ENCODE measurements at regions of chr19 and their contacts with region 1.

Region 1: DNA sequence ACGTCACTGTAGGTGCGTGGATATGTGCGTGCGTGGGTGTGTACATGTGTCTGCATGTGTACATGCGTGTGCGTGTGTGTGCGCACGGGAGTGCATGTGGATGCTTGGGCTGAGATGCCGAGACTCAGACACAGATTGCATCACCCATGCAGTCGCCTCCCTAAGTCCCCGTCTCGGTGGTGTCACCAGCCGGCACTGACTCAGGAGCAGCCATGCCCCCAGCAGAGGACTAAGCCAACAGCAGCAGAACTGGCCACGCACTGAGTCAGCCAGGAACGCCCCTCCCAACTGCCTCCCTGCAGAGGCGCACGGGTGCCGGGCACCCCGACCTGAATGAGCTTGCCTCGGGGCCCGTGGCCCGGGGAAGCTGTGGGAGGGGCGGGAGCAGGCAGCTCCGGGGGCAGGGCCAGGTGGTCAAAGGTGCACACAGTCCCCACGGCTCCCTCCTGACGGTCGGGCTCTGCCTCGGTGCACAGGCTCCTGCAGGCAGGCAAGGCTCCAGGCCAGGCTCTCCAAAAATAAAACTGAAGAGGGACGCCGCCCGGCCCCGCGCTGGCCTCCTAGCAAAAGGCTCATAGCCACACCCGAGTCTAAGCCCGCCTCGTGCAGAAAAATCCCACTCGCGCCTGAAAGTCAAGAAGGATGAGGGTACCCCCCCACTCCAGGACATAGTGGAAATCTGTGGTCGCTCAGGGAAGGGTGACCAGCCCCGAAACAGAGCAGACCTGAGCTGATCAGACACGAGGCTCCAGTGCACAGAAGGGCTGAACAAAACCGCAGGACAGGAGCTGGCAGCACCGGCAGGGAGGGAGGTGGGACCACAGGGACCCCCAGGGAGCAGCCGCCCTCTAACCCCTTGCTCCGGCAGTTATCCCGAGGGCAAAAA is 49.2 kb downstream of the GADD45B start:
- DNase-seq: peak; percentile 74 to 86
- ATAC-seq: peak; percentile 82 to 91
- H3K4me3 ChIP-seq: peak overlapping the region; percentile 31
- H3K27ac ChIP-seq: peak overlapping the region; percentile 97 to 99
- H3K4me1 ChIP-seq: peaks cover 53% of the 10 kb centered on the region
- CTCF ChIP-seq: no peak
- EP300 ChIP-seq: peak; percentile 59 to 77; a peak in 3 of 5 replicates
- POLR2A ChIP-seq: no peak
- RAD21 ChIP-seq: peak; percentile 4 to 36; a peak in 2 of 5 replicates

Region 2: GRCh38 chr19:2543463-2544442 is 18.7 kb after region 1 on chr19:
- CTCF ChIA-PET with region 1: interaction called, 16 read pairs
- POLR2A ChIA-PET with region 1: interaction called, 10 read pairs
- DNase-seq: peak; percentile 73 to 93
- ATAC-seq: peak; percentile 81 to 82
- H3K4me3 ChIP-seq: peak overlapping the region; percentile 33; the same call in 2 of the 3 replicates
- H3K27ac ChIP-seq: peak overlapping the region; percentile 97 to 100
- H3K4me1 ChIP-seq: peaks cover 64% of the 10 kb centered on the region
- CTCF ChIP-seq: no peak
- EP300 ChIP-seq: peak in 1 of 2 experiments; percentile 37; a peak in 1 of 5 replicates
- POLR2A ChIP-seq: no peak
- RAD21 ChIP-seq: peak; percentile 39 to 58

Region 3: DNA sequence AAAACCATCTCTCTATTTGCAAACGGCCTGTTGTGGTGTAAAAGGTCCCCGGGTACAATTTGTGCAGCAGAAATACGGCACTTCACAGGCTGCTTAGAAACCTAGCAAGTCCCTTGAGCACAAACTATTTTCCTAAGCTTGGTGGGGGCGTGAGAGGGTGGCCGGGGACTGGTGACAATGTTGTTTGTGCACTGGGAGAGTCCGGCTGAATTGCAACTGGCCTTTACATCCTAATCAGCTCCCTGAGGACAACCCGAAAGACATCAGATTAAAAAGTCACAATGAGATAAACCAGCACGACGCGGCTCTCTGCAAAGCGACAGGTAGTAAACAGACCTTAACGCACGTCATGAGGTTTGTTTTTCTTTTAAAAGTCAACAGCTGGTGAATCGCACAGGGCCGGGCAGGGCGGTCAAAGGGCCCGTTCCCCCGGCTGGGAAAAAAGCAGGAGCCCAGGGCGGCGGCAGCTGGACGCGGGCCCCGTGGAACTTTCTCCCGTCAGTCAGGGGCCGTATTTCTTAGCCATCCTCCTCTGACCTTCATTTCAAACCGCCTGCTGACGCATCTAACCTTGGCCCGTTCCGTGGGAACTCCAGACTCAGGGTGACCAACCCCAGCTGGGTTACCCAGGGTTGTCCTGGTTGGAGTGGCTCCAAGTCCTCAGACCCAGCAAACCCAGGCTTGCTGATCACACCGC is 63.1 kb after region 1 on chr19:
- CTCF ChIA-PET with region 1: no interaction called
- POLR2A ChIA-PET with region 1: no interaction called
- DNase-seq: peak; percentile 43 to 76
- ATAC-seq: peak; percentile 65 to 79; a peak in 5 of 6 replicates
- H3K4me3 ChIP-seq: peak overlapping the region; percentile 21; the same call in 2 of the 3 replicates
- H3K27ac ChIP-seq: peak overlapping the region; percentile 70 to 79
- H3K4me1 ChIP-seq: peaks cover 38% of the 10 kb centered on the region
- CTCF ChIP-seq: no peak
- EP300 ChIP-seq: 0 out of 5 replicates have a peak, but pooled peaks of 1 of the 2 experiments have one; percentile 32
- POLR2A ChIP-seq: no peak
- RAD21 ChIP-seq: no peak